Heart left ventricle (tissue), 16 donors: ENCODE measurements at regions of chr14 and their contacts with region 1.

Region 1: GRCh38 chr14:59360923-59361794 is 104.0 kb downstream of the GPR135 start:
- DNase-seq: peak; percentile 75 to 92 (median 86)
- ATAC-seq: peak; percentile 68 to 77 (median 74)
- H3K4me3 ChIP-seq: peak overlapping the region in 5 of 12 donors; percentile 4 to 37 (median 21)
- H3K27ac ChIP-seq: peak overlapping the region; percentile 61 to 93 (median 84)
- H3K4me1 ChIP-seq: peaks cover 0 to 83% (median 60%) of the 10 kb centered on the region in 12 donors
- H3K27me3 ChIP-seq: no peaks in the 10 kb centered on the region
- CTCF ChIP-seq: peak in 3 of 12 donors; percentile 9 to 24 (median 19)
- POLR2A ChIP-seq: no peak

Region 2: GRCh38 chr14:59175404-59175803 is 185.8 kb before region 1 on chr14:
- intact Hi-C with region 1: no loop called
- DNase-seq: no peak
- ATAC-seq: no peak
- H3K4me3 ChIP-seq: no peak overlapping the region
- H3K27ac ChIP-seq: no peak overlapping the region
- H3K4me1 ChIP-seq: peaks cover 0 to 10% (median 0%) of the 10 kb centered on the region in 12 donors
- H3K27me3 ChIP-seq: no peaks in the 10 kb centered on the region
- CTCF ChIP-seq: no peak
- POLR2A ChIP-seq: no peak

Region 3: GRCh38 chr14:59202031-59202430 is 159.1 kb before region 1 on chr14:
- intact Hi-C with region 1: no loop called
- DNase-seq: no peak
- ATAC-seq: peak in 1 of 4 donors; percentile 46
- H3K4me3 ChIP-seq: no peak overlapping the region
- H3K27ac ChIP-seq: no peak overlapping the region
- H3K4me1 ChIP-seq: peaks cover 0 to 88% (median 37%) of the 10 kb centered on the region in 12 donors
- H3K27me3 ChIP-seq: no peaks in the 10 kb centered on the region
- CTCF ChIP-seq: no peak
- POLR2A ChIP-seq: no peak

Region 4: DNA sequence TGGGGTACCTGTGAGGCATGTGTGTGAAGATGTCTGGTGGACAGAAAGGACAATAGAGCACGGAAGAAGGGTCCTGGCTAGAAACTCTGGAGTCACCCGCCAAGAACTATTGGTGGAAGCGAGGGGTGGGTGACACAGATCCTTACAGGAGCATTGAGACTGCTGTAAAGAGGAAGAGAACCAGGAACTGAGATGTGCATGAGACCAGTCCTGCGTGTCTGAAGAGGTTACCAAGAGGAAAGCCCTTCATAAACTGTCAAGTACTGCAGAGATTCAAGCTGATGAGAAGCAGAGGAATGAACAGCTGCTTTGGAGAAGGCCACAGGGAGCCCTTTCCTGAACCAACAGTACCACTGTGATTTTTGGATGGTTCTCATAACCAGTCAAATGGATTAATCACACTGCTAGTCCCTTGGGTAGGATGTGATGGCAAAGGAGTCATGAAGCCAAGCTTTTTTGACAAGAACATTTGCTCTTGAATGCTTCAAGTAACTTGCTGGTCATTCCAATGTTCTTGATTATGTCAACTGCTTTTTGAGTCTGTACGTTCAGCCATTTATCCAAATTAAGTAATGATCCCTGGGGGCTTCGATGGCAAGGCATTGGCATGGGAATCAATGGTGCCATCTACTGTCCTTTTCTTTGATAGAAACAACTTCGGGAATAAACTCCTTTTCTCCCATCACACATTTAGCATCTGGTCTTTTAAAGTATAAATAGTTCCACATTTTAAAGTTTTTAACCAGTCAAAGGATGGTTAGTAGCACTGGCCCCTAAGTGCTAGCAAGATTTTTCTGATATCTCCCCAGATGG is 61.1 kb after region 1 on chr14:
- intact Hi-C with region 1: loop called in 6 of 10 experiments (anchors 5 to 10 kb)
- DNase-seq: no peak
- ATAC-seq: peak in 2 of 4 donors; percentile 10 to 14
- H3K4me3 ChIP-seq: no peak overlapping the region
- H3K27ac ChIP-seq: peak overlapping the region in 6 of 12 donors; percentile 3 to 51 (median 18)
- H3K4me1 ChIP-seq: peaks cover 0 to 65% (median 36%) of the 10 kb centered on the region in 12 donors
- H3K27me3 ChIP-seq: no peaks in the 10 kb centered on the region
- CTCF ChIP-seq: peak in 8 of 12 donors; percentile 13 to 55 (median 28)
- POLR2A ChIP-seq: no peak